Activated naive CD4-positive, alpha-beta T cell treated with anti-CD3 and anti-CD28 coated beads for 36 hours (primary cell): ENCODE measurements at regions of chr3 and their contacts with region 1.

Region 1: DNA sequence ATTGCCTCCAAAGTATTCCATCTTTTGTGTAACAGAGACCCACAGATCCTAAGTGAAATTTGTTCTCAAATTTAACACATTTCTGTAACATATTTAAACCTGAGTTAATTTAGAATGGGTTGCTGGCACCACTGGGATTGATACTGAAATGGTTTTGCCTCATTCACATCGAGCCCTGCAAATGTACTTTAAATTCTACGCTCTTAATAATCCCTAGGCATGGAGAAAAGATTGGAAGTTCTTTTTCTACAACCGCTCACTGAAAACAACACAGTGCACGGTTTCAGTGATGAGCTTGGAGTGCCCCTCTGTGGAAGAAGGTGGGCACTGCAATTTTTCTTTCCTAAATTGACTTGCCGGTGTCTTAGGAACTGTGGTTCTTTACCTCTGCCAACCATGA is 109.9 kb upstream of the ATP11B start:
- DNase-seq: peak; percentile 80
- H3K4me3 Mint-ChIP-seq: peak overlapping the region; percentile 66
- H3K27ac Mint-ChIP-seq: no peak overlapping the region
- H3K4me1 Mint-ChIP-seq: peaks cover 8% of the 10 kb centered on the region
- H3K27me3 Mint-ChIP-seq: peaks cover 16% of the 10 kb centered on the region

Region 2: GRCh38 chr3:180802837-180803236 is 1880.6 kb before region 1 on chr3:
- CTCF ChIA-PET with region 1: no interaction called
- intact Hi-C with region 1: loop called (anchors 10 kb)
- DNase-seq: no peak
- H3K4me3 Mint-ChIP-seq: no peak overlapping the region
- H3K27ac Mint-ChIP-seq: no peak overlapping the region
- H3K4me1 Mint-ChIP-seq: no peaks in the 10 kb centered on the region
- H3K27me3 Mint-ChIP-seq: peaks cover 13% of the 10 kb centered on the region

Region 3: DNA sequence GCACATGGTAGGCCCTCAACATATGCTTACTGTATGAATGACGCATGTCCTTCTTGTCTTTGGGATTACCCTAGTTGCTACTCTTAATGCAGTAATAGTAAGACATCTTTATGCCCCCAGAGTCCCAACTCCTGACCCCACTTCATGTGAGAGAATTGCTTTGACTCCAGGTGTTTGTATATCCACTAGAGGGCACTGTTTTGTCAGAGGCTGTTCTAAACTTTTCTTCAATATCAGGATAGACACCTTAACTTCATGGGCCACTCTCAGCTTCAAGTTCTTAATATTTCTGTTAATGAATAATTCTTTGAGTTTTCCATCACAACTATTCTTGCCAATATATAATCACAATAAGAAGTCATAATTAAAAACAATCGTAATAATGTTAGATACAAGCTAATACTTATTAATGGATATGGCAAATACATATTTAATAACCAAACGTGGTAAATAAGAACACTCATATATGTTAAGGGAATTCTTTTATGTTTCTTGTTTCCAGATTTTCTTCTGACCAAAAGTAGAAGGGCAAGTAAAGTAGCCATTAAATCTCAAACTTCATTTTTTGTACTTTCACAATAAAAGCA is 1356.7 kb before region 1 on chr3:
- CTCF ChIA-PET with region 1: interaction called, 7 read pairs
- intact Hi-C with region 1: loop called (anchors 1 kb)
- DNase-seq: no peak
- H3K4me3 Mint-ChIP-seq: no peak overlapping the region
- H3K27ac Mint-ChIP-seq: no peak overlapping the region
- H3K4me1 Mint-ChIP-seq: no peaks in the 10 kb centered on the region
- H3K27me3 Mint-ChIP-seq: peaks cover 3% of the 10 kb centered on the region

Region 4: DNA sequence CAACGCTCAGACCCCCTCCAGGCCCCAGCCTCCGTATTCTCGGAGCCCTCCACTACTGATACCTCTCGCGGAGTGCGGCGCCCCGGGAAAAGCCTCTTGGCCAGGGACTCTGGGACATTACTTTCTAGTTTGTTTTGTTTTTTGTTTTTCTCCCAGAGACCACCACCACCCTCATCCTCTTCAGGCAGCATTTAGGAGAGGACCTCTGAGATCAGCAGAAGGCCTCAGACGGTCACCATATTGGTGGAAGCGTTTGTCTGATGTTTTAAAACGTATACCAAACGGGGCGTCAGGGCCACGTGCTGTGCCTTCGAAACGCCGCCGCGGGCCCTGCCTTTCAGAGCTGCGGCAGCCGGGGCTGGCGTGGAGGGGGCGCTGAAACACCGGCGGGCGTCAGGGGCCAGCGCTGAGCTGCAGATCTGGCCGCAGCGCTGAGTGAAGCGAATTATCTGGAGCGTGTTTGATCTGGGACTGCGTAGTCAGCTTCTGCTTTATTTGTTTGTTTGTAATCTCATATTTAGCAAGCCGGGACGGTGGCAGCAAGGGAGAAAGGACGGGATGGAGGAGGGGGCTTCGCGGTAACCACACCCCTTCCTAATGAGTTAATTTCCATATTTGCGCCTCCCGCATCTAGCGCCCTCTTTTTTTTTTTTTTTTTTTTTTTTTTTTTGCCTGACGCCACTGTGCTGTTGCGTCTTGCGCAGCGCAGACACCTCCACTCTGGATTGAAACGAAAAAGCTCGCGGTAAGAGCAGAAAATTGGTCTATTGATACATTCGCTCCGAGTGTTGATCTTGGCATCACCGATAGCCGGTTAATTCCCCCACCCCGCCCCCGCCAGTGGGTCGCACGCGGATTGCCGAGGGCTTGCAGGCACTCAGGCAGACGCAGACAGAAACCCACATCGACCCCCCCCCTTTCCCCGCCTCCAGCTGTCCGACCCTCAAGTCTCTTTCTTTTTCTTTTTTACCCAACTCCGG is 956.8 kb before region 1 on chr3:
- CTCF ChIA-PET with region 1: no interaction called
- intact Hi-C with region 1: loop called (anchors 5 kb)
- DNase-seq: no peak
- H3K4me3 Mint-ChIP-seq: peak overlapping the region; percentile 49
- H3K27ac Mint-ChIP-seq: no peak overlapping the region
- H3K4me1 Mint-ChIP-seq: peaks cover 22% of the 10 kb centered on the region
- H3K27me3 Mint-ChIP-seq: peaks cover 88% of the 10 kb centered on the region

Region 5: DNA sequence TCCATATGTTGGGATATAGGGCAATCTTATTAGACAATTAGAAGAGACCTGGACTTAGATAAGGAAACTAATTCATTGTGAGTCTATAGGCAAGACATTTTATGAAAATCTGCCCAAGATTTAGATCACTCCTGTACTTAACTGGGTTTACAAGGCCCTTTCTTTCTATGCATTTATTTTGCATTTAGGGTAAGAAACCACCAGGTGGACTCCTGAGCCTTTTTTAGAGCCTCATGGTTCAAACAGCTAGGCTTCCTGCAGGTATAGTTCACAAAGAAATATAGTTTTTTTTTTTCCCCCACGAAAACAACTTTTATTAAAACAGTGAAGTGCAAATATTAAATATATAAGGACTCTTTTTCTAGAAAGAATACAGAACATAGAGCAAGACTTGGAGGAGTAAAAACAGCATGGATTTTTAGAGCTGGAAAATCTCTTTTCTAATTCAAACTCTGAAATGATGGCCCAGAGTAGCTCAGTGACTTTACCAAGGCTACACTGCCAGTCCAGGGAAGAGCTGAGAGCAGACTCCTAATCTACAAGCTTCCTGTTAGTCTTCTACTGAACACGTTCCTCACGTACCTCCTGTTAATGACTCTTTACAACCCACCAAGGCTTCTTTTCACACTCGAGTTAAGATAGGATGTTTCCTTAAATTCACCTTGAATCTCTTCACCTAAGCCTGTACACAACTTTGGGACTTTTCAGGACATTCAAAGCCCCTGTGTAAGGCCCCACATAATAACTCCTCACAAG is 291.1 kb before region 1 on chr3:
- CTCF ChIA-PET with region 1: interaction called, 3 read pairs
- intact Hi-C with region 1: loop called (anchors 5 kb)
- DNase-seq: no peak
- H3K4me3 Mint-ChIP-seq: no peak overlapping the region
- H3K27ac Mint-ChIP-seq: no peak overlapping the region
- H3K4me1 Mint-ChIP-seq: no peaks in the 10 kb centered on the region
- H3K27me3 Mint-ChIP-seq: no peaks in the 10 kb centered on the region

Region 6: GRCh38 chr3:182618085-182618732 is 65.2 kb before region 1 on chr3:
- CTCF ChIA-PET with region 1: interaction called, 5 read pairs
- intact Hi-C with region 1: loop called (anchors 5 kb)
- DNase-seq: no peak
- H3K4me3 Mint-ChIP-seq: no peak overlapping the region
- H3K27ac Mint-ChIP-seq: no peak overlapping the region
- H3K4me1 Mint-ChIP-seq: no peaks in the 10 kb centered on the region
- H3K27me3 Mint-ChIP-seq: peaks cover 9% of the 10 kb centered on the region

Region 7: DNA sequence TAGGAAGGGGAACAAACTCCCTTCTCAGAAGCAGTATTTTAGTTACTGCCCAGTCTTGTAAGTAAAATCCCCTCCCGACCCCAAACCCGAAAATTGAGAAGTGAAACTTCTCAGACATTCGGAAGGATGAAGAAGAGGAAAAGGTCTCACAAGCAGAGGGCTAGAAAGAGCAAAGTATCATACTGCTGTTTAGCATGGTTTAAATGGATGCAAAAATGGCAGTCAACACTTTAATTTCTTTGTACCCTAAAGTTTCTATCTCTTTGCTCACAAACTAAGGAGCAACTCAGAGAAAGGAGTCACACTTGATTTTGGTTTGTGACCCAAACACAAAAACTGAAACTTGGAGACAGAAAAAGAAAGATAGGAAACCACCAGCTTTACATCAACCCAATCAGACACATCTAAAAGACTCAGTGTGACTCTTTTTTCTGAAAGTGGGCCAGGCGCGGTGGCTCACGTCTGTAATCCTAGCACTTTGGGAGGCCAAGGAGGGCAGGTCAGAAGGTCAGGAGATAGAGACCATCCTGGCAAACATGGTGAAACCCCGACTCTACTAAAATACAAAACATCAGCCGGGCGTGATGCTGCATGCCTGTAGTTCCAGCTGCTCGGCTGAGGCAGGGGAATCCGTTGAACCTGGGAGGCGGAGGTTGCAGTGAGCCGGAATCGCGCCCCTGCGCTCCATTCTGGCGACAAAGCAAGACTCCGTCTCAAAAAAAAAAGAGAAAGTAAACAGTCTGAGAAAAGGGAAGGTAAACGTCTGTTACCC is 46.6 kb after region 1 on chr3:
- CTCF ChIA-PET with region 1: no interaction called
- intact Hi-C with region 1: no loop called
- DNase-seq: peak; percentile 17
- H3K4me3 Mint-ChIP-seq: no peak overlapping the region
- H3K27ac Mint-ChIP-seq: no peak overlapping the region
- H3K4me1 Mint-ChIP-seq: no peaks in the 10 kb centered on the region
- H3K27me3 Mint-ChIP-seq: peaks cover 4% of the 10 kb centered on the region